ENCODE measurements at regions of chr2 and their contacts with region 1.

Region 1: GRCh38 chr2:55617175-55618024 is at the start of gene PPP4R3B:
- DNase-seq: peak; percentile 96 to 100 (median 99)

Region 2: GRCh38 chr2:55519938-55520885 is 97.2 kb before region 1 on chr2:
- intact Hi-C with region 1: loop called (anchors 2 kb)
- DNase-seq: peak in 40 of 42 donors; percentile 9 to 78 (median 50)